ENCODE measurements at regions of chr19 and their contacts with region 1.

Region 1: GRCh38 chr19:42268704-42269477 is at the start of gene CIC:
- DNase-seq: peak; percentile 98 to 100
- ATAC-seq: peak; percentile 68 to 90 (median 75)
- H3K4me3 ChIP-seq: peak within 1 kb of the TSS; percentile 84
- H3K4me3 Mint-ChIP-seq: peak within 1 kb of the TSS; percentile 94
- H3K27ac ChIP-seq: peak within 1 kb of the TSS; percentile 98
- H3K27ac Mint-ChIP-seq: no peak within 1 kb of the TSS
- H3K4me1 ChIP-seq: peaks cover 32% of the 10 kb centered on the region
- H3K4me1 Mint-ChIP-seq: no peaks in the 10 kb centered on the region
- H3K27me3 ChIP-seq: no peaks in the 10 kb centered on the region
- H3K27me3 Mint-ChIP-seq: no peaks in the 10 kb centered on the region
- CTCF ChIP-seq: no peak
- total RNA-seq, gene CIC: 95.4 to 121 (median 108) TPM

Region 2: GRCh38 chr19:42219812-42220750 is 48.8 kb before region 1 on chr19 and contains the start of gene ZNF526:
- intact Hi-C with region 1: loop called (anchors 1 kb)
- DNase-seq: peak; percentile 93 to 99
- ATAC-seq: peak; percentile 73 to 87 (median 78)
- H3K4me3 ChIP-seq: peak within 1 kb of the TSS; percentile 84
- H3K4me3 Mint-ChIP-seq: peak within 1 kb of the TSS; percentile 98
- H3K27ac ChIP-seq: peak within 1 kb of the TSS; percentile 76
- H3K27ac Mint-ChIP-seq: peak within 1 kb of the TSS; percentile 98 to 100
- H3K4me1 ChIP-seq: peaks cover 56% of the 10 kb centered on the region
- H3K4me1 Mint-ChIP-seq: peaks cover 51 to 58% of the 10 kb centered on the region in 2 donors
- H3K27me3 ChIP-seq: no peaks in the 10 kb centered on the region
- H3K27me3 Mint-ChIP-seq: no peaks in the 10 kb centered on the region
- CTCF ChIP-seq: no peak
- total RNA-seq, gene ZNF526: 8.8 to 10.6 (median 10.2) TPM

Region 3: DNA sequence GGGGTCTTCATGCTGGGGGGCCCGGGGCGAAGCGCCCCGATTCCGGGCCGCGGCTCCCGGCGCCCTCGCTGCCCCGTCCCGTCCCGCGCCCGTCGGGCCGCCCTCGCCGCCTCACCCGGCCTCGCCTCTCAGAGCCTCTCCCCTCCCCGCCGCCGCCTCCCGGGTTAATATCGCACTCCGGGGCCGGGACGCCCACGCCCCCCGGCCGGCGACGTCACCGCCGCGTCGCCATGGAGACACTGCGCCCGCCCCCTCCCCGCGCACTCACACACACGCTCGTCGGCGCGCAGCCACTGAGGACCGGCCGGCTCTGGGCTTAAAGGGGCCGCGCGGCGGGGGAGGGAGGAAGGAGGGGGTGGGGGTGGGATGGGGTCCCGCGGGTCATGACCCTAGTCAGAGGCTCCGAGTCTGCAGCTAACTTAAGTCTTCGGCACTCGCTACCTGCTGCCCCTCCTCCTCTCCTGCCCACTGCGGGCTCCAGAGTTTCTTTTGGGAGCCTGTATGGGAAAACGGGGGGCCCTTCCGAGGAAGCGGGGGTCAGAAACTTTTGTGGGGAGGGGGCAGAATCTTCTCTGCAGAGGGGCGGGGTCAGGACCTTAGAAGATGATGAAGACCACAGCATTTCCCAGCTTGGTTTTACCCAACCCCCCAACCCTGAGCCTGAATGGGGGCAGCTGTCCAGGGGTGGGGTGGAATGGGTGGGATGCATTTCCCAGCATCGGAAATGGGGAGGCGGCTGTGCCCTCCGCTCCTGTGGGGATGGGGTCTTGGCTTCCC is 13.7 kb before region 1 on chr19 and contains the start of gene ERF:
- intact Hi-C with region 1: loop called (anchors 1 kb)
- DNase-seq: peak; percentile 96 to 97
- ATAC-seq: peak; percentile 77 to 94 (median 88)
- H3K4me3 ChIP-seq: peak within 1 kb of the TSS; percentile 100
- H3K4me3 Mint-ChIP-seq: peak within 1 kb of the TSS; percentile 78
- H3K27ac ChIP-seq: peak within 1 kb of the TSS; percentile 100
- H3K27ac Mint-ChIP-seq: peak within 1 kb of the TSS; percentile 61 to 95
- H3K4me1 ChIP-seq: peaks cover 40% of the 10 kb centered on the region
- H3K4me1 Mint-ChIP-seq: peaks cover 17 to 32% of the 10 kb centered on the region in 2 donors
- H3K27me3 ChIP-seq: no peaks in the 10 kb centered on the region
- H3K27me3 Mint-ChIP-seq: no peaks in the 10 kb centered on the region
- CTCF ChIP-seq: no peak
- total RNA-seq, gene ERF: 58.3 to 115 (median 75.6) TPM

Region 4: GRCh38 chr19:42412227-42412626 is 143.3 kb after region 1 on chr19:
- intact Hi-C with region 1: no loop called
- DNase-seq: no peak
- ATAC-seq: no peak
- H3K4me3 ChIP-seq: no peak overlapping the region
- H3K4me3 Mint-ChIP-seq: no peak overlapping the region
- H3K27ac ChIP-seq: no peak overlapping the region
- H3K27ac Mint-ChIP-seq: peak overlapping the region in 1 of 2 donors; percentile 67
- H3K4me1 ChIP-seq: no peaks in the 10 kb centered on the region
- H3K4me1 Mint-ChIP-seq: peaks cover 0 to 41% of the 10 kb centered on the region in 2 donors
- H3K27me3 ChIP-seq: no peaks in the 10 kb centered on the region
- H3K27me3 Mint-ChIP-seq: no peaks in the 10 kb centered on the region
- CTCF ChIP-seq: no peak